ENCODE measurements at regions of chr6 and their contacts with region 1.

Region 1: GRCh38 chr6:25458485-25458884 is 179.3 kb downstream of the CARMIL1 start:
- DNase-seq: no peak
- ATAC-seq: no peak
- H3K4me3 ChIP-seq: no peak overlapping the region
- H3K4me3 Mint-ChIP-seq: no peak overlapping the region
- H3K27ac ChIP-seq: no peak overlapping the region
- H3K27ac Mint-ChIP-seq: no peak overlapping the region
- H3K4me1 ChIP-seq: no peaks in the 10 kb centered on the region
- H3K4me1 Mint-ChIP-seq: peaks cover under 1% of the 10 kb centered on the region
- H3K27me3 ChIP-seq: no peaks in the 10 kb centered on the region
- H3K27me3 Mint-ChIP-seq: peaks cover 4% of the 10 kb centered on the region
- CTCF ChIP-seq: no peak

Region 2: GRCh38 chr6:25369433-25370181 is 88.9 kb before region 1 on chr6:
- CTCF ChIA-PET with region 1: no interaction called
- POLR2A ChIA-PET with region 1: no interaction called
- intact Hi-C with region 1: loop called (anchors 10 kb)
- DNase-seq: no peak
- ATAC-seq: no peak
- H3K4me3 ChIP-seq: no peak overlapping the region
- H3K4me3 Mint-ChIP-seq: peak overlapping the region; percentile 42
- H3K27ac ChIP-seq: peak overlapping the region in 1 of 2 donors; percentile 22
- H3K27ac Mint-ChIP-seq: peak overlapping the region; percentile 43
- H3K4me1 ChIP-seq: peaks cover 19 to 30% of the 10 kb centered on the region in 2 donors
- H3K4me1 Mint-ChIP-seq: peaks cover 62% of the 10 kb centered on the region
- H3K27me3 ChIP-seq: no peaks in the 10 kb centered on the region
- H3K27me3 Mint-ChIP-seq: no peaks in the 10 kb centered on the region
- CTCF ChIP-seq: no peak

Region 3: DNA sequence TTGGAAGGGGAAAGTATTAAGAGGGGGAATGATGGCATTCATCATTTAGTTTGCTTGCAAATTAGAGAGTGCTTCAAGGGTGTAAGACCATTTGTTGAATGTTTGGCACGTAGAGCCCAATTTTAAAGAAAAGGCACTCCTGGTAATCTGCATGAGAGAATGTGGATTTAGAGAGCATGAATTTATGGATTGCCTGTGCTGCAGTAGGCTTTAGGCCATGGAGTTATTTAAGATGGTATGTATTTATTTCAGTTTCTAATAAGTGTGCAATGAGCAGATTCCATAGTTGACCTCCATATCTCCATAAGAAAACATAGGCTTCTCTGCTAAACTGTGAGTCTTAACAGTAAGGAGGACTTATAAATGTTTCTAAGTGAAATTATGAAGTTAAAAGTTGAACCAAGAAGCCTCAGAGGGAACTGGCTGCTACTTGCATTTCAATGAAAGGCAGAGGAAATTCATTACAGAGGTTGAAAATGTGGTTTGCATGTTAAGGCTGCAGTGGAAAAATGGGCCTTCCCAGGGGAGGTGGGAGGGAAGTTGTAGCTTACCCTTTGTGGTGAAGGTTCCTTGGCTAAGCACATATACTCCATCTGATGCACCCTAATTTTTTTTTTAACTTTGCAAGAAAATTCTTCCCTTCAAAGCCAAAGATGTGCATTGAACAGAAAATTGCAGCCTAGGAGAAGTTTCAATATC is 45.1 kb before region 1 on chr6:
- CTCF ChIA-PET with region 1: no interaction called
- POLR2A ChIA-PET with region 1: no interaction called
- intact Hi-C with region 1: no loop called
- DNase-seq: no peak
- ATAC-seq: no peak
- H3K4me3 ChIP-seq: no peak overlapping the region
- H3K4me3 Mint-ChIP-seq: no peak overlapping the region
- H3K27ac ChIP-seq: no peak overlapping the region
- H3K27ac Mint-ChIP-seq: no peak overlapping the region
- H3K4me1 ChIP-seq: peaks cover 20 to 25% of the 10 kb centered on the region in 2 donors
- H3K4me1 Mint-ChIP-seq: peaks cover 33% of the 10 kb centered on the region
- H3K27me3 ChIP-seq: no peaks in the 10 kb centered on the region
- H3K27me3 Mint-ChIP-seq: no peaks in the 10 kb centered on the region
- CTCF ChIP-seq: no peak